PC-9 (cell line): ENCODE measurements at regions of chr3 and their contacts with region 1.

Region 1: GRCh38 chr3:59857589-59858346 is 807.9 kb upstream of the CFAP20DC start:
- DNase-seq: peak; percentile 56 to 70
- H3K4me3 ChIP-seq: no peak overlapping the region
- H3K27ac ChIP-seq: no peak overlapping the region
- H3K4me1 ChIP-seq: no peaks in the 10 kb centered on the region; the same call in 1 of the 2 replicates
- H3K27me3 ChIP-seq: no peaks in the 10 kb centered on the region
- CTCF ChIP-seq: peak; percentile 87

Region 2: GRCh38 chr3:58824285-58824684 is 1033.5 kb before region 1 on chr3:
- CTCF ChIA-PET with region 1: interaction called, 12 read pairs
- POLR2A ChIA-PET with region 1: no interaction called
- intact Hi-C with region 1: no loop called
- DNase-seq: peak in 1 of 2 experiments; percentile 37
- H3K4me3 ChIP-seq: no peak overlapping the region
- H3K27ac ChIP-seq: no peak overlapping the region
- H3K4me1 ChIP-seq: no peaks in the 10 kb centered on the region
- H3K27me3 ChIP-seq: no peaks in the 10 kb centered on the region
- CTCF ChIP-seq: peak; percentile 70

Region 3: DNA sequence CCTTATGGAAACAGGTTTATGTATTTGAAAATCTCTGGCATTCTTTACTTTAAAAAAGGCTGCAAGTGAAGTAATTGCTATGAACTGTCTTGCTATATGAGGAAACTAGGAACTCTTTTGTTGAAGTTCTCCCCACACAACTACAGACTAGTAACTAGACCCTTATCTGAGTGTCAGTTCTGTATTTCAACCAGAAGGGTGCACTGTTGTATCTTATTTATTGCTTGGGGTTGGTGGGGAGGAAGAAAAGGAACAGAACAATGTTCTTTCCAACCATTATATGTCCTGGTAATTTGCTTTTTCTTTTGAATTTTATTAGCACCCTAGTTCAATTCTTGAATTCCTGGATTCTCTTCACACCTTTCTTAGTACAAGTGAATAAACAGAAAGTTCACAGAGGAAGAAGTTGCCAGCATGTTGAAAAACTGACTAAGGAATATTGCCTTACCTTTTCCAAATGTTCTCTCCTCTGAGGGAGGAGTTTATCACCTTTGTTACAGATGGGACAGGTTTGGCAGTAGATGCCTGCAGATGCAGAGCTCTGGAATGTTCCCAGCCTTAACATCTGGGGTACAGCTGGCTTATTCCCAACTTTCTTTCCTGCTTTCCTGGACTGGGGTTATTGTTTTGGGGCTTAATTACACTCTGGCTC is 645.5 kb before region 1 on chr3:
- CTCF ChIA-PET with region 1: no interaction called
- POLR2A ChIA-PET with region 1: no interaction called
- intact Hi-C with region 1: loop called (anchors 1 kb)
- DNase-seq: peak in 1 of 2 experiments; percentile 46
- H3K4me3 ChIP-seq: no peak overlapping the region
- H3K27ac ChIP-seq: no peak overlapping the region
- H3K4me1 ChIP-seq: no peaks in the 10 kb centered on the region
- H3K27me3 ChIP-seq: no peaks in the 10 kb centered on the region
- CTCF ChIP-seq: peak; percentile 80

Region 4: GRCh38 chr3:59809710-59810444 is 47.9 kb before region 1 on chr3:
- CTCF ChIA-PET with region 1: interaction called, 11 read pairs
- POLR2A ChIA-PET with region 1: no interaction called
- intact Hi-C with region 1: no loop called
- DNase-seq: no peak
- H3K4me3 ChIP-seq: no peak overlapping the region
- H3K27ac ChIP-seq: peak overlapping the region; percentile 89
- H3K4me1 ChIP-seq: peaks cover 17% of the 10 kb centered on the region
- H3K27me3 ChIP-seq: no peaks in the 10 kb centered on the region
- CTCF ChIP-seq: peak; percentile 49

Region 5: DNA sequence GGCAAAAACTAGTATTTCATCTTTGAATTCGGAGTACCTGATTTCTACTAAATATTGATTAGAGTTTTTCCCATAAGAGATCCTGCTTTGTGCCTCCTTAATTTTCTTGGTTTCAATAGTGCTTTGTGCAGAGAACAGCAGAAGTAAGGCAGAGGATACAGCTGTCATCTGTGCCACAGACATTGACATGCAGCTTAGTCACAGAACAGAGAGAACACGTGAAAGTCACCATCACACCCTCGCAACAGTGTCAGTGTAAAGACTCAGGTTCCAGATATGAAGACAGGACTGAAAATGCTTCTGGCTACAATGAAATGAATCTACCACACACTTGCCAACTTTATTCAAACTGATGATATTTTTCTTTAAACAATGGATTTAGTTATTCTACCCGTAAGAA is 134.8 kb after region 1 on chr3:
- CTCF ChIA-PET with region 1: no interaction called
- POLR2A ChIA-PET with region 1: no interaction called
- intact Hi-C with region 1: no loop called
- DNase-seq: no peak
- H3K4me3 ChIP-seq: no peak overlapping the region
- H3K27ac ChIP-seq: no peak overlapping the region
- H3K4me1 ChIP-seq: no peaks in the 10 kb centered on the region
- H3K27me3 ChIP-seq: no peaks in the 10 kb centered on the region
- CTCF ChIP-seq: no peak